ENCODE measurements at regions of chr17 and their contacts with region 1.

Region 1: GRCh38 chr17:47949136-47949759 is 7.9 kb downstream of the PNPO start:
- DNase-seq: peak; percentile 59 to 71 (median 63)
- H3K4me3 ChIP-seq: peak overlapping the region in 1 of 2 donors; percentile 51
- H3K4me3 Mint-ChIP-seq: peak overlapping the region; percentile 61 to 91 (median 74)
- H3K27ac ChIP-seq: peak overlapping the region; percentile 37
- H3K27ac Mint-ChIP-seq: peak overlapping the region; percentile 29 to 93 (median 69)
- H3K4me1 ChIP-seq: peaks cover 34% of the 10 kb centered on the region
- H3K4me1 Mint-ChIP-seq: peaks cover 21 to 36% (median 29%) of the 10 kb centered on the region in 4 donors
- H3K27me3 ChIP-seq: no peaks in the 10 kb centered on the region
- H3K27me3 Mint-ChIP-seq: no peaks in the 10 kb centered on the region

Region 2: GRCh38 chr17:47604598-47604927 is 344.7 kb before region 1 on chr17:
- CTCF ChIA-PET with region 1: no interaction called
- POLR2A ChIA-PET with region 1: no interaction called
- intact Hi-C with region 1: no loop called
- DNase-seq: no peak
- H3K4me3 ChIP-seq: no peak overlapping the region
- H3K4me3 Mint-ChIP-seq: no peak overlapping the region
- H3K27ac ChIP-seq: no peak overlapping the region
- H3K27ac Mint-ChIP-seq: peak overlapping the region in 2 of 7 donors; percentile 37 to 67
- H3K4me1 ChIP-seq: no peaks in the 10 kb centered on the region
- H3K4me1 Mint-ChIP-seq: peaks cover 0 to 6% (median 0%) of the 10 kb centered on the region in 4 donors
- H3K27me3 ChIP-seq: no peaks in the 10 kb centered on the region
- H3K27me3 Mint-ChIP-seq: no peaks in the 10 kb centered on the region

Region 3: DNA sequence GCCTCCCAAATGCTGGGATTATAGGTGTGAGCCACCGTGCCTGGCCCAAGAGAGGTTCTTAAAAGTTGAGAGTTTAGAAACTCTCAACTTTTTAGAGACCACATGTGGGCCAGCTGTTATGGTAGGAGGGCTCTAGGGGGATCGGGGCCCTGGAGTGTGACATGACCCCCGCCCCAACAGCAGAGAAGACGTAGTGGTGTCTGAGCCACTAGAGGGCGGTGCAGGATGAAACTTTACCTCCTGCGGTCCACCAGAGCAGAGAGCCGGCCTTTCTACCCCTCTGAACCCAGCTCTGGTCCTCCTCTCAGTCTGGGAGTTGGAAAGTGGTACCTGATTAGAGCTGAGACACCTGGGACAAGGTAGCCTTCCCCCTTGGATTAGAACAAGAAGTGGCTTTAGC is 29.1 kb after region 1 on chr17:
- CTCF ChIA-PET with region 1: interaction called, 19 read pairs
- POLR2A ChIA-PET with region 1: no interaction called
- intact Hi-C with region 1: no loop called
- DNase-seq: peak in 4 of 5 donors; percentile 33 to 48 (median 40)
- H3K4me3 ChIP-seq: no peak overlapping the region
- H3K4me3 Mint-ChIP-seq: no peak overlapping the region
- H3K27ac ChIP-seq: no peak overlapping the region
- H3K27ac Mint-ChIP-seq: peak overlapping the region in 2 of 7 donors; percentile 12 to 47
- H3K4me1 ChIP-seq: peaks cover 11% of the 10 kb centered on the region
- H3K4me1 Mint-ChIP-seq: peaks cover 1 to 19% (median 10%) of the 10 kb centered on the region in 4 donors
- H3K27me3 ChIP-seq: no peaks in the 10 kb centered on the region
- H3K27me3 Mint-ChIP-seq: no peaks in the 10 kb centered on the region

Region 4: DNA sequence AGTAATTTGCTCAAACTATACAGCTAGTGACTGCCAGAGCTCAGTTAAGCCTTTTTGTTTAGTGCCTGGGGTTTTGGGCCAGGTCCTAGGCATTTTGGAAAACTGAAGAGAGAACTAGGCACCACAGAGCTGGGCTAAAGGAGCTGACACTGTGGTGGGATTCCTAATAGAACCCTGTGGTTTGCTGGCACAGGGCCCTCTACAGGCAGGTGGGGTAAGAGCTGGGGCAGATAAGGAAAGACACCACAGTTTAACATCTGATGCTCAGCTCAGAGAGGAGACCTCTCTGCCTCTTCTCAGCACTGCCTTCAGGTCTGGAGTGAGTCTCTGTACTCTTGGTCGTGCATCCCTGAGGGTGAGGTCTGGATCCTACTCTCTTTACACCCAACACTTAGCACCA is 279.5 kb after region 1 on chr17:
- CTCF ChIA-PET with region 1: no interaction called
- POLR2A ChIA-PET with region 1: no interaction called
- intact Hi-C with region 1: no loop called
- DNase-seq: no peak
- H3K4me3 ChIP-seq: no peak overlapping the region
- H3K4me3 Mint-ChIP-seq: no peak overlapping the region
- H3K27ac ChIP-seq: no peak overlapping the region
- H3K27ac Mint-ChIP-seq: peak overlapping the region in 1 of 7 donors; percentile 17
- H3K4me1 ChIP-seq: no peaks in the 10 kb centered on the region
- H3K4me1 Mint-ChIP-seq: peaks cover 20 to 39% (median 26%) of the 10 kb centered on the region in 4 donors
- H3K27me3 ChIP-seq: no peaks in the 10 kb centered on the region
- H3K27me3 Mint-ChIP-seq: no peaks in the 10 kb centered on the region

Measured in CD4-positive, alpha-beta memory T cell (primary cell).